Common myeloid progenitor, CD34-positive (primary cell): ENCODE measurements at regions of chr9 and their contacts with region 1.

Region 1: DNA sequence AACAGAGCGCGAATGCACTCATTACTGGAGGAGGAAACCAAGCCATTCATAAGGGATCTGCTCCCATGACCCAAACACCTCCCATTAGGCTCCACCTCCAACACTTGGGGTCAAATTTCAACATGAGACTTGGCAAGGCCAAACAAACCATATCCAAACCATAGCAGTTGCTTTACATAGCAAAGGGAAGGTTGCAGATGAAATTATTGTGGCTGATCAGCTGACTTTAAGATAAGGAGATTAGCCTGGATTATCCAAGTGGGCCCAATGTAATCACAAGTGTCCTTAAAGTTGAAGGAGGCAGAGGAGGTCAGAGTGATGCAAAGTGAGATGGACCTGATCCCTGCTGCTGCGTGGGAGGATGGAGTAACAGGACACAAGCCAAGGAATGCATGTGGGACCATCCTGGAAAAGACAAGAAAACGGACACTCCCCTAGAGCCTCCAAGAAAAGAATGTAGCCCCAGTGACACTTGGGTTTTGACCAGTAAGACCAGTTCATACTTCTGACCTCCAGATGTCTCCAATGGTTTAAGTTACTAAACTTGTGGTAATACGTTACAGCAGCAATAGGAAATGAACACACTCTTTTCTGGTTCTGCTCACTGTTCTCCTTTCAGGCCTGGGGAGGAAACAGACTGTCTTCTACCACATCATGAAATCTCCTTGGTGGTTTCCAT is 167.3 kb downstream of the GNAQ start:
- DNase-seq: peak; percentile 86 to 96 (median 93)
- H3K4me3 ChIP-seq: no peak overlapping the region
- H3K27ac ChIP-seq: peak overlapping the region in 1 of 2 experiments; percentile 23
- H3K4me1 ChIP-seq: peaks cover 14 to 22% (median 19%) of the 10 kb centered on the region in 4 experiments
- H3K27me3 ChIP-seq: no peaks in the 10 kb centered on the region

Region 2: DNA sequence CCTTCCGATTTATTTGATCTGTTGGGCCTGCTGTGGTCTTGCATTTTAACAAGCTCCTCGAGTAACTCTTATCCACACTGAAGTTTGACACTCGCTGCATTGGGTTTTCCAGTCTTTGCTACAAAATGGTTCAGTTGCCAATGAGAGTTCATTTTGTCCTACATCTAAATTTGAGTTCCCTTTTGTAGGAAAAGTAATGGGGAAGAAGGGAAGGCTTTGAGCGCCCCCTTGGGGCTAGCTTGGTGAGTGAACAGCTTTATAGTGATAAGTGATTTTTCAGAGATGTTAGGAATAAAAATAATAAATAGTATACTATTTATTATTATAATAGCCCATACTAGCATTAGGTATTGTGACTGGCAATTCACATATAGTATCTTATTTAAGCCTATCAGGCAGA is 257.1 kb after region 1 on chr9:
- CTCF ChIA-PET with region 1: interaction called, 11 read pairs
- POLR2A ChIA-PET with region 1: interaction called, 3 read pairs
- DNase-seq: peak; percentile 69 to 82 (median 70)
- H3K4me3 ChIP-seq: no peak overlapping the region
- H3K27ac ChIP-seq: no peak overlapping the region
- H3K4me1 ChIP-seq: peaks cover 0 to 13% (median 2%) of the 10 kb centered on the region in 4 experiments
- H3K27me3 ChIP-seq: no peaks in the 10 kb centered on the region